Activated T-helper 2 cell treated with anti-CD3 and anti-CD28 coated beads, Interferon-gamma antibody, Interleukin-2, Interleukin-4, amounts not matched to agents 10 μg/mL and 5 μg/mL and 100 μg/mL, durations not matched to agents 14 hours and 24 hours and 36 hours (primary cell): ENCODE measurements at regions of chr19 and their contacts with region 1.

Region 1: DNA sequence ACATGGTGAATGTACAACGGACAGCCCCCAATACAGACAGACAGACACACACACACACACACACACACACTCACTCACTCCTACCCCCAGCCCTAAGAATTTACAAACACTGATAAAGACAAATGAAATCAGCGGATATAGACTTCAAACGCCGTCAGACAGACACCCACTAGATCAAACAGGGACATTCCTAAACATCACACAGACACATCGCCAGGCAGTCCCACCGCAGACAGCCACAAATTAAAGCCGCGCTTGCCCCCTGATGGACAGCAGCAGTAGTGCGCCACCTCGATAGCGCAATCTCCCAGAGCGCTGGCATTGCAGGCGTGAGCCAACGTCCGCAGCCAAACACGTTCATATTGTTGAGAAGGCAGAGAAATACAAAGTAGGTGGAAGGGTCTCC is 24.7 kb upstream of the ADGRE1 start:
- DNase-seq: peak; percentile 87
- H3K4me3 Mint-ChIP-seq: peak overlapping the region; percentile 72
- H3K27ac Mint-ChIP-seq: peak overlapping the region; percentile 66
- H3K4me1 Mint-ChIP-seq: peaks cover 12% of the 10 kb centered on the region
- H3K27me3 Mint-ChIP-seq: no peaks in the 10 kb centered on the region

Region 2: GRCh38 chr19:6110360-6110977 is 752.2 kb before region 1 on chr19 and contains the start of gene RFX2:
- intact Hi-C with region 1: loop called (anchors 5 kb)
- DNase-seq: peak; percentile 99
- H3K4me3 Mint-ChIP-seq: peak within 1 kb of the TSS; percentile 90
- H3K27ac Mint-ChIP-seq: peak within 1 kb of the TSS; percentile 85
- H3K4me1 Mint-ChIP-seq: peaks cover 24% of the 10 kb centered on the region
- H3K27me3 Mint-ChIP-seq: peaks cover 11% of the 10 kb centered on the region
- total RNA-seq, gene RFX2: 8.7 and 12.5 TPM in 2 replicates

Region 3: GRCh38 chr19:6632002-6632621 is 230.6 kb before region 1 on chr19:
- intact Hi-C with region 1: loop called (anchors 1 kb)
- DNase-seq: peak; percentile 71
- H3K4me3 Mint-ChIP-seq: no peak overlapping the region
- H3K27ac Mint-ChIP-seq: no peak overlapping the region
- H3K4me1 Mint-ChIP-seq: peaks cover 25% of the 10 kb centered on the region
- H3K27me3 Mint-ChIP-seq: peaks cover 2% of the 10 kb centered on the region

Region 4: GRCh38 chr19:6663236-6664201 is 199.2 kb before region 1 on chr19:
- intact Hi-C with region 1: no loop called
- DNase-seq: no peak
- H3K4me3 Mint-ChIP-seq: no peak overlapping the region
- H3K27ac Mint-ChIP-seq: no peak overlapping the region
- H3K4me1 Mint-ChIP-seq: peaks cover 43% of the 10 kb centered on the region
- H3K27me3 Mint-ChIP-seq: no peaks in the 10 kb centered on the region

Region 5: GRCh38 chr19:6737284-6738046 is 125.2 kb before region 1 on chr19 and contains the start of gene GPR108:
- intact Hi-C with region 1: loop called (anchors 1 kb)
- DNase-seq: peak; percentile 100
- H3K4me3 Mint-ChIP-seq: peak within 1 kb of the TSS; percentile 98
- H3K27ac Mint-ChIP-seq: peak within 1 kb of the TSS; percentile 98
- H3K4me1 Mint-ChIP-seq: peaks cover 37% of the 10 kb centered on the region
- H3K27me3 Mint-ChIP-seq: no peaks in the 10 kb centered on the region
- total RNA-seq, gene GPR108: 90.4 and 95.4 TPM in 2 replicates

Region 6: GRCh38 chr19:6767357-6768235 is 95.1 kb before region 1 on chr19 and contains the start of gene SH2D3A:
- intact Hi-C with region 1: loop called (anchors 2 kb)
- DNase-seq: peak; percentile 92
- H3K4me3 Mint-ChIP-seq: peak within 1 kb of the TSS; percentile 89
- H3K27ac Mint-ChIP-seq: peak within 1 kb of the TSS; percentile 91
- H3K4me1 Mint-ChIP-seq: peaks cover 33% of the 10 kb centered on the region
- H3K27me3 Mint-ChIP-seq: no peaks in the 10 kb centered on the region
- total RNA-seq, gene SH2D3A: 7.7 and 8.7 TPM in 2 replicates

Region 7: DNA sequence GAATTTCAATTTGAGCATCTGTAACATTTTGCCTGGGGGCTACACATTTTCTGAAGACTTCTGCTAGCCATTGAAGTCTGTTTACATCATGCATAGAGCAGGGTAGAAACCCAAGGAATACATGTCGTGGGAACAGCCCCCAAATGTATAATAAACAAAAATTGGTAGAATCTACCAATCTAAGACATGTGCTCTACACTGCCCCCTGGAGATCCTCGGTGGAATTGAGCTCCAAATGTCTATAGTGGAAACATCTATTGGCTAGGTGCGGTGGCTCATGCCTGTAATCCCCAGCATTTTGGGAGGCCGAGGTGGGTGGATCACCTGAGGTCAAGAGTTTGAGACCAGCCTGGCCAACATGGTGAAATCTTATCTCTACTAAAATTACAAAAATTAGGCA is 101.3 kb after region 1 on chr19:
- intact Hi-C with region 1: no loop called
- DNase-seq: no peak
- H3K4me3 Mint-ChIP-seq: no peak overlapping the region
- H3K27ac Mint-ChIP-seq: no peak overlapping the region
- H3K4me1 Mint-ChIP-seq: no peaks in the 10 kb centered on the region
- H3K27me3 Mint-ChIP-seq: no peaks in the 10 kb centered on the region